ENCODE measurements at regions of chr18 and their contacts with region 1.

Region 1: GRCh38 chr18:58671111-58671631 is at the start of gene MALT1:
- DNase-seq: peak; percentile 97
- ATAC-seq: peak; percentile 83
- H3K4me3 Mint-ChIP-seq: peak within 1 kb of the TSS; percentile 98
- H3K27ac Mint-ChIP-seq: peak within 1 kb of the TSS; percentile 96
- H3K4me1 Mint-ChIP-seq: peaks cover 63% of the 10 kb centered on the region
- H3K27me3 Mint-ChIP-seq: no peaks in the 10 kb centered on the region
- total RNA-seq, gene MALT1: 39.3 to 40.5 TPM

Region 2: GRCh38 chr18:58529714-58530354 is 141.3 kb before region 1 on chr18:
- CTCF ChIA-PET with region 1: interaction called, 11 read pairs
- POLR2A ChIA-PET with region 1: no interaction called
- intact Hi-C with region 1: no loop called
- DNase-seq: peak; percentile 83
- ATAC-seq: peak; percentile 39
- H3K4me3 Mint-ChIP-seq: no peak overlapping the region
- H3K27ac Mint-ChIP-seq: no peak overlapping the region
- H3K4me1 Mint-ChIP-seq: peaks cover 30% of the 10 kb centered on the region
- H3K27me3 Mint-ChIP-seq: peaks cover 13% of the 10 kb centered on the region

Region 3: DNA sequence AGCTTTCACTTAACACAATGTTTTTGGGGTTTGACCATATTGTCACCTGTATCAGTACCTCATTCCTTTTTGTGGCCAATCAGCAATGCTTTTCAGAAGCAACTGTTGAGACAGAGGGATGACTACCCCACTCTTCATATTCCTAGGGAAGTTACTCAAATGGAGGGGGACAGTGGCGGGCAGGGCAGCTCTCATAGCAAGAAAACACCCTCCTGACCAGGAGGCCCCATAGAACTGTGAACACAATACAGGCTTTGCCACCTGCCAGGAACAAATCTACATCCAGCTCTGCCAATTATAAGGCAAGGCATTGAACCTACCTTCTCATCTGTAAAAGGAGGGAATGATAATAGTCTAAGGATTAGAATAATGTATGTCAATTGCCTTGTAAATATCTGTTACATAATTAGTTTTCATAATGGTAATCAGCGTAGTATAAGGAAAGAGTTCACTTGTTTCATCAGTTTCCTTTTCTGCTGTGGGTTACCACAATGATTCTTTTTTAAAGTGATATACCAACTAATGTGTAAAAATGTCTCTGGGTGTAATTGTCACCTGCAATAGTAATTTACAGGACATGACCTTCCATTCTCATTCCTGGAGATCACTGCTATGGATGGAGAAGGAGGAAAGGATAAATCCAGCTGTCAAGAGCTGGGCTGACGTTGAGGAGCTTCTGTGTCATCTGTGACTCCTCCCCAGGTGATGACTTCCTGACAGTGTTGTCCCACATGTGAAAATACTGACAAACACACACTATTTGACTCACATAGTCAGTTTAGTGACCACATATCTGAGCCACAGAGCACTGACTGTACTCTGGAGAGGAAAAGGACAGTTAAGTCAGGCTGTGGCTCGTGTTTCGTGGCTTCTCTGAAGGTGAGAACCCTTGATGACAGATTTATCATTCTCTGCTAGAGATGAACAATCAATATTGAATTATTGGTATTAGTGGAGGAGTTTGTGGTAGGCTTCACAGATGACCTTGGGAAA is 55.7 kb before region 1 on chr18:
- CTCF ChIA-PET with region 1: no interaction called
- POLR2A ChIA-PET with region 1: interaction called, 4 read pairs
- intact Hi-C with region 1: loop called (anchors 1 kb)
- DNase-seq: peak; percentile 87
- ATAC-seq: peak; percentile 95
- H3K4me3 Mint-ChIP-seq: peak overlapping the region; percentile 30
- H3K27ac Mint-ChIP-seq: peak overlapping the region; percentile 91
- H3K4me1 Mint-ChIP-seq: peaks cover 46% of the 10 kb centered on the region
- H3K27me3 Mint-ChIP-seq: peaks cover 8% of the 10 kb centered on the region

Region 4: DNA sequence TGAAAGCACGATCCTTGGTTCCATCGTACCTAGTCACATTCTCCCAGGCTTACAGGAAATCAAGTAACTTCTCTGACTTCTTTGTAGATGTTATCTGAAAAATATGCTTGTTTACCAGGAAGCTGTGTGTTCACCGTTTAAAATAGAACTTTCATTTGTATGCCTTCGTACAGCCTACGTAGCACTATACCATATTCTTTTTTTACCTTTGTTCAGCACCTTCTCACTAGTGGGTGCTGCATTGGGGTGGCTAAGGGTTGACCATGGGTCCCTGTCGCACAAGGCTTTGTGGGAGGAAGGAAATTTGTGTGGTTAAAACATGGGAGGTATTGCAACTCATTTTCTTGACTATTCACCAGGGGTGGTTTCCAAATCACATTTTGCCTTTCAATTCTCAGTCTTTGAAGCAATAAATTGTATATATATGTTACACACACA is 16.7 kb after region 1 on chr18:
- CTCF ChIA-PET with region 1: interaction called, 12 read pairs
- POLR2A ChIA-PET with region 1: interaction called, 5 read pairs
- intact Hi-C with region 1: loop called (anchors 1 kb)
- DNase-seq: peak; percentile 69
- ATAC-seq: peak; percentile 79
- H3K4me3 Mint-ChIP-seq: peak overlapping the region; percentile 64
- H3K27ac Mint-ChIP-seq: peak overlapping the region; percentile 92
- H3K4me1 Mint-ChIP-seq: peaks cover 83% of the 10 kb centered on the region
- H3K27me3 Mint-ChIP-seq: no peaks in the 10 kb centered on the region

Region 5: DNA sequence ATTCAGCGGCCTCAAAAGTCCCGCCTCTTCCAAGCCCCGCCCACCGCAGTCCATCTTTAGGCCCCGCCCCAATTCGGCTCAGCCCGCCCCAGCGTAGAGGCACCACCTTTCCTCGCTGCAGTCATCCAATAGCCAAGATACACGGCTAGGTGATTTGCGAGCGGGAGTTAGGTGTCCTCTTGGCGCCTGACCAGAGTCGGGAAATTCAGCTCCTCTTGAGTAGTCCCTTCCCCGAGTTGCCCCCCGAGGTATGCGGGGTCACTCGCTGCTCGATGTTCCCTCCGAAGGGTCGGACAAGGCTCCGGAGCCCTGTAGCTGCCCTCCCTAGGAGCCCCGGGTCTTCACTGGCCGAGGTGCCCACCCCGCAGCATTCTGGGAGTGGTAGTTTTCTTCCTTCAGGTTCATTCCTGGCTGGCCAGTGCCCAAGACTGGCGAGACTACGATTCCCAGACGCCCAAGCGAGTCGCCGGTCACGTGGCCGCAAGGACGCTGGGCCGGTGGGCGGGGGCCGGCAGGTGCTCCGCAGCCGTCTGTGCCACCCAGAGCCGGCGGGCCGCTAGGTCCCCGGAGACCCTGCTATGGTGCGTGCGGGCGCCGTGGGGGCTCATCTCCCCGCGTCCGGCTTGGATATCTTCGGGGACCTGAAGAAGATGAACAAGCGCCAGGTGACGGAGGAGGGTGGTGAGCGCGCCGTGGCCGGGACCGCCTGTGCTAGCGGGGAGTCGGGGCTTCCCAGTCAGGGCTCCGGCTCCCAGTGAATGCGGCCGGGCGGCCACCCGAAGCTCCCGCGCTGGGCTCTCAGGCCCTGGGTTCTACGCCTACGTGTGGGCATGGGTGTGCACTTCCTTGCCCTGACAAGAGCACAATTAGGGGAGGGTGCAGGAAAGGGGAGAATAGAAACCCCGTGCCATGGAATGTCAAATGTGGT is 468.5 kb after region 1 on chr18 and contains the start of gene SEC11C:
- CTCF ChIA-PET with region 1: no interaction called
- POLR2A ChIA-PET with region 1: no interaction called
- intact Hi-C with region 1: loop called (anchors 1 to 10 kb)
- DNase-seq: peak; percentile 97
- ATAC-seq: peak; percentile 94
- H3K4me3 Mint-ChIP-seq: peak within 1 kb of the TSS; percentile 94
- H3K27ac Mint-ChIP-seq: peak within 1 kb of the TSS; percentile 95
- H3K4me1 Mint-ChIP-seq: peaks cover 42% of the 10 kb centered on the region
- H3K27me3 Mint-ChIP-seq: peaks cover 8% of the 10 kb centered on the region
- total RNA-seq, gene SEC11C: 53.5 to 70.2 TPM

Region 6: GRCh38 chr18:59623456-59624368 is 952.5 kb after region 1 on chr18:
- CTCF ChIA-PET with region 1: no interaction called
- POLR2A ChIA-PET with region 1: no interaction called
- intact Hi-C with region 1: no loop called
- DNase-seq: no peak
- ATAC-seq: no peak
- H3K4me3 Mint-ChIP-seq: no peak overlapping the region
- H3K27ac Mint-ChIP-seq: no peak overlapping the region
- H3K4me1 Mint-ChIP-seq: no peaks in the 10 kb centered on the region
- H3K27me3 Mint-ChIP-seq: peaks cover 9% of the 10 kb centered on the region

Region 7: GRCh38 chr18:59899298-59900221 is 1228.4 kb after region 1 on chr18 and contains the start of gene PMAIP1:
- CTCF ChIA-PET with region 1: no interaction called
- POLR2A ChIA-PET with region 1: no interaction called
- intact Hi-C with region 1: loop called in 1 of 2 experiments (anchors 10 kb)
- DNase-seq: peak; percentile 92
- ATAC-seq: peak; percentile 65
- H3K4me3 Mint-ChIP-seq: peak within 1 kb of the TSS; percentile 86
- H3K27ac Mint-ChIP-seq: peak within 1 kb of the TSS; percentile 95
- H3K4me1 Mint-ChIP-seq: peaks cover 31% of the 10 kb centered on the region
- H3K27me3 Mint-ChIP-seq: no peaks in the 10 kb centered on the region
- total RNA-seq, gene PMAIP1: 58.7 to 97.2 TPM